ENCODE measurements at regions of chr4 and their contacts with region 1.

Region 1: GRCh38 chr4:86918539-86919072 is 16.2 kb upstream of the AFF1 start:
- DNase-seq: peak in 2 of 14 experiments; percentile 44 to 64
- ATAC-seq: no peak
- H3K4me3 ChIP-seq: no peak overlapping the region
- H3K4me3 Mint-ChIP-seq: no peak overlapping the region
- H3K27ac ChIP-seq: no peak overlapping the region
- H3K27ac Mint-ChIP-seq: no peak overlapping the region
- H3K4me1 ChIP-seq: peaks cover 2% of the 10 kb centered on the region
- H3K4me1 Mint-ChIP-seq: peaks cover 4% of the 10 kb centered on the region
- H3K27me3 ChIP-seq: no peaks in the 10 kb centered on the region
- H3K27me3 Mint-ChIP-seq: no peaks in the 10 kb centered on the region
- CTCF ChIP-seq: no peak

Region 2: GRCh38 chr4:87093443-87094123 is 175.0 kb after region 1 on chr4:
- CTCF ChIA-PET with region 1: interaction called, 112 read pairs
- POLR2A ChIA-PET with region 1: interaction called, 34 read pairs
- intact Hi-C with region 1: loop called (anchors 1 kb)
- DNase-seq: peak in 13 of 14 experiments; percentile 5 to 74 (median 30)
- ATAC-seq: peak; percentile 84
- H3K4me3 ChIP-seq: no peak overlapping the region
- H3K4me3 Mint-ChIP-seq: no peak overlapping the region
- H3K27ac ChIP-seq: no peak overlapping the region
- H3K27ac Mint-ChIP-seq: peak overlapping the region; percentile 74
- H3K4me1 ChIP-seq: peaks cover 5% of the 10 kb centered on the region
- H3K4me1 Mint-ChIP-seq: peaks cover 20% of the 10 kb centered on the region
- H3K27me3 ChIP-seq: no peaks in the 10 kb centered on the region
- H3K27me3 Mint-ChIP-seq: no peaks in the 10 kb centered on the region
- CTCF ChIP-seq: peak; percentile 72

Measured in CD4-positive, alpha-beta T cell (primary cell).